ENCODE measurements at regions of chr10 and their contacts with region 1.

Region 1: DNA sequence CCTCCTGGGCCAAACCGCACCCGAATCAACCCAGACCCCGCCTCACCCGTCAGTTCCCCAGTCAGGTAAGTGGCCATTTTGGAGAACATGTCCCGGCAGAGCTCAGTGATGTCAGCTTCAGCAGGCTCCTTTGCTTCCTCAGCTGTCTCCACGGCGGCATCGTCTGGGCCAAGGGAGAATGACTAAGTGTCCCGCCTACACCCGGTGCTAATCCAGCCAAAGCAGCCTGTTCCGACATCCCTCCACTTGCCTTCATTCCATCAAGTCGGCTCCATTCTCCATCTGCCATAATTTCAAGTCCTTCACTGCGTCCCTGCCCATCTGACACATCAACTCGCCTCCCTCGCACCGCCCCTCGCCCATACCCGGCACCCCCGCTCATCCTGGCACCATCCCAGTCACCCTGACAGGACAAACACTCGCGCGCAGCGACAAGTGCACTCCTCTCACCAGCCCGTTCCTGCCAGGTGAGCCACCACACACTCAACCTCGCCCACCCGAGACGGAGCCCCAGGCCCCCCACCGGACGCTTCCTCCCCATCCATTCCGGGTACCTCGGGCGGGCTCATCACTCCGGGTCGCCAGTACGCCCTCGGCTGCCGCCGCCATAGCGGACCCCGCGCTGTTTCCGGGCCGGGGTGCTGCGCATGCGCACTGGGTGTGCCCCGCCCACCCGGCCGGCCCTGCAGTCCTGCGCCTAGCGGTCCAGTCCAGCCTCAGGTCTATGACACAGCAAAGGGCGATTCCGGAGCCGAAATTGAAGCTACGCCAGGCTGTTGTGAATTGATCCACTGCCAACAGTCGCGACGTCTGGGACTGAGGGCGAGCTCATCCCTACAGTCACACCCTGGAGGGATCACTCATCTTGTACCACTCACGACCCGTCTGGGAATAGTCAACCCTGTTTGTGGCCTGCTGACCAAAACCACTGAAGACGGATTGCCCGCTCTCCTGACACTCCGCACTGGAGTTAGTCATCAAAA is at the start of gene BLOC1S2:
- DNase-seq: peak; percentile 80 to 90
- ATAC-seq: peak; percentile 89 to 92
- H3K4me3 ChIP-seq: peak within 1 kb of the TSS; percentile 70 to 95 (median 89)
- H3K27ac ChIP-seq: peak within 1 kb of the TSS; percentile 89 to 98 (median 96)
- H3K4me1 ChIP-seq: peaks cover 26 to 40% of the 10 kb centered on the region in 2 donors
- H3K27me3 ChIP-seq: no peaks in the 10 kb centered on the region
- CTCF ChIP-seq: peak in 2 of 5 experiments; percentile 35 to 36
- POLR2A ChIP-seq: peak; percentile 88 to 89
- total RNA-seq, gene BLOC1S2: 60.4 to 114 (median 75.1) TPM

Region 2: GRCh38 chr10:100185364-100186252 is 100.7 kb before region 1 on chr10 and contains the start of gene ERLIN1:
- in situ Hi-C with region 1: no loop called
- intact Hi-C with region 1: loop called (anchors 1 kb)
- DNase-seq: peak; percentile 85 to 88
- ATAC-seq: peak; percentile 95
- H3K4me3 ChIP-seq: peak within 1 kb of the TSS; percentile 78 to 94 (median 90)
- H3K27ac ChIP-seq: peak within 1 kb of the TSS; percentile 94 to 99 (median 95)
- H3K4me1 ChIP-seq: peaks cover 15 to 35% of the 10 kb centered on the region in 2 donors
- H3K27me3 ChIP-seq: no peaks in the 10 kb centered on the region
- CTCF ChIP-seq: no peak
- POLR2A ChIP-seq: peak; percentile 81 to 83
- total RNA-seq, gene ERLIN1: 5.3 to 8.5 (median 7.3) TPM

Region 3: GRCh38 chr10:100229819-100230422 is 56.4 kb before region 1 on chr10:
- in situ Hi-C with region 1: no loop called
- intact Hi-C with region 1: loop called (anchors 2 kb)
- DNase-seq: no peak
- ATAC-seq: no peak
- H3K4me3 ChIP-seq: peak overlapping the region; percentile 73 to 96 (median 86)
- H3K27ac ChIP-seq: peak overlapping the region; percentile 80 to 87 (median 83)
- H3K4me1 ChIP-seq: peaks cover 14 to 16% of the 10 kb centered on the region in 2 donors
- H3K27me3 ChIP-seq: no peaks in the 10 kb centered on the region
- CTCF ChIP-seq: no peak
- POLR2A ChIP-seq: no peak

Region 4: DNA sequence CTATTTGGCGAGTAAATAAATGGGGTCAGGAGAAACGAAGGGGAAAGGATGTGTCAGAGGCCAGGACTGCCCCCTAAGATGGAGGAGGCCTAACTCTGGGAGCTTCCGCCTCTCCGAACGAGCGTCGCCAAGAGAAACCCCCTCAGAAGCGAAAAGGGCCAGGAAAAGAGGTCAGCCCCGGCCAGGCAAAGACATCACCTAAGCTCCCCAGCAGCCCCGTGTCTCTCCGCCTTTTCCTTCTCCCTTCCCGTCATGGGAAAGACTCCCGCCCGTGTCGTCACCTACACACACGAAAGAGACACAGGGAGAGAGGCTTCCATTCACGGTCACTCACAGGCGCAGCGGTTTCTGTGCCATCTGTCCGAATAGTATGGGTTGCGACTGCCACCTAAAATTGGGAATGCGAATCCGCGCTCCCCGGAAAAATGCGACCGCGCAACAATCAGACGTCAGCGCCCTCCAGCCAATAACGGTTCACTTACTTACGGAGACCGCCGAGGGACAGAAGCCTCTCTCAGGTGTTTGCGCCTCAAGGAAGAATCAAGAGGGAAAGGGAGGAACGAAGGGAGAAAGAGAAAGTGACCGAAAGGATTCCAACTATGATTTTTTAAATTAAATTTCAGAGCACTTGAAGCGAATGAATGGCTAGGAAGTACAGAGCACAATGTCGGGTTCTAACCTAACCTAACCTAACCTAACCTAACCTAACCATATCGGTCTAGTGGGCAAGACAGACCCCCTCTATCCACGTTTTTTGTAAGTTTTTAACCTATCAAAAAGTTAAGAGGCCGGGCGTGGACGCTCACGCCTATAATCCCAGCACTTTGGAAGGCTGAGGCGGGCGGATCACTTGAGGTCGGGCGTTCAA is 18.9 kb before region 1 on chr10 and contains the start of gene CWF19L1:
- in situ Hi-C with region 1: no loop called
- intact Hi-C with region 1: loop called (anchors 1 kb)
- DNase-seq: peak; percentile 78 to 86
- ATAC-seq: peak; percentile 99
- H3K4me3 ChIP-seq: peak within 1 kb of the TSS; percentile 68 to 99 (median 90)
- H3K27ac ChIP-seq: peak within 1 kb of the TSS; percentile 76 to 86 (median 80)
- H3K4me1 ChIP-seq: peaks cover 9 to 20% of the 10 kb centered on the region in 2 donors
- H3K27me3 ChIP-seq: no peaks in the 10 kb centered on the region
- CTCF ChIP-seq: no peak
- POLR2A ChIP-seq: peak; percentile 14 to 25
- total RNA-seq, gene CWF19L1: 11.6 to 13.8 (median 13.0) TPM

Region 5: DNA sequence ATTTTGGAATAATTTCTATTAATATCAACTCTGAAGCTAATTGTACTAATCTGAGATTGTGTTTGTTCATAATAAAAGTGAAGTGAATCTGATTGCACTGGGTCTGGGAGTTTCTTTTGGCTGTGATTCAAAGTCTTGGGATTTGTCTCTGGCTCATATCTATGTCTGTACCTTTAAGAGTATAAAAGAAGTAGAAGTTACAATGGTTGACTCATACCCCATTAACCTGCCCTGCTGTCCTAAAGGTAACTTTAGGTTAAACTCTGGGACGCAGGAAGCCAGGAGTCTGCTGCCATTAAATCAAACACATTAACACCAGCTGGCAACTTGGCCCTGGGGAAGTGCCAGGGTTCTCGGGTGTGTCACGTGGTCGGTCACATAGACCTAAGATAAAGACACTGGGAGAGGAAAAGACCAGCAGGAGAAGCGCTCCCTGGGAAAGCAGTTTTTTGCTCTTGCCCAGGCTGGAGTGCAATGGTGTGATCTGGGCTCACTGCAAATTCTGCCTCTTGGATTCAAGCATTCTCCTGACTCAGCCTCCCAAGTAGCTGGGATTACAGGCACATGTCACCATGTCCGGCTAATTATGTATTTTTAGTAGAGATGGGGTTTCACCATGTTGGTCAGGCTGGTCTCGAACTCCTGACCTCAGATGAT is 78.5 kb after region 1 on chr10:
- in situ Hi-C with region 1: no loop called
- intact Hi-C with region 1: loop called (anchors 2 kb)
- DNase-seq: peak; percentile 86 to 96
- ATAC-seq: peak; percentile 98 to 99
- H3K4me3 ChIP-seq: no peak overlapping the region
- H3K27ac ChIP-seq: peak overlapping the region; percentile 66 to 74 (median 70)
- H3K4me1 ChIP-seq: peaks cover 16 to 17% of the 10 kb centered on the region in 2 donors
- H3K27me3 ChIP-seq: no peaks in the 10 kb centered on the region
- CTCF ChIP-seq: peak in 1 of 5 experiments; percentile 17
- POLR2A ChIP-seq: peak in 1 of 2 donors; percentile 34

Region 6: DNA sequence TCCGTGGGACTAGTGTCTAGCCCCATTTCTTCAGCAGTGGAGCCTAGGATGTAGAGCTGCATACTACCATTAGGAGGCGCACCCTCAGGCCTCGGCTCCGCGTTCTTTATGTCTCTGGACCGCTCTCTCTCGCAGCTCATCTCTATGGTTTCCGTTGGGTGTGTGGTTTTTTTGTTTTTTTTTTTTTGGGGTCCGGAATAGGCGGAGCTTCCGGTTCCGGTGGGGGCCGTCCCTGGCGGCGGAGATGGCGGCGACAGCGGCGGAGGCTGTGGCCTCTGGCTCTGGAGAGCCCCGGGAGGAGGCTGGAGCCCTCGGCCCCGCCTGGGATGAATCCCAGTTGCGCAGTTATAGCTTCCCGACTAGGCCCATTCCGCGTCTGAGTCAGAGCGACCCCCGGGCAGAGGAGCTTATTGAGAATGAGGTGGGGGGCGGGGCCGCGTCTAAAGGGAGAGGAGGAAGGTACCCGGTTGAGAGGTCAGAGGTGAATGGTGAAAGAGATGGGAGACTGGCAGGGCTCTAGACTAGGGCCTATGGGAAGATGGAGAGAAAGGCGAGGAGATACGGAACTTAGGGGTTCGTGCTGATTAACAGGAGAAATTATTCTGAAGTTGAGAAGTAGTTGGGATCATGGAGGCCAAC is 249.5 kb after region 1 on chr10 and contains the start of gene HIF1AN:
- in situ Hi-C with region 1: no loop called
- intact Hi-C with region 1: loop called (anchors 2 kb)
- DNase-seq: peak; percentile 81 to 91
- ATAC-seq: peak; percentile 97 to 98
- H3K4me3 ChIP-seq: peak within 1 kb of the TSS; percentile 71 to 99 (median 88)
- H3K27ac ChIP-seq: peak within 1 kb of the TSS; percentile 76 to 86 (median 82)
- H3K4me1 ChIP-seq: peaks cover 20 to 31% of the 10 kb centered on the region in 2 donors
- H3K27me3 ChIP-seq: no peaks in the 10 kb centered on the region
- CTCF ChIP-seq: peak; percentile 71 to 96 (median 83)
- POLR2A ChIP-seq: peak; percentile 67 to 81
- total RNA-seq, gene HIF1AN: 21.6 to 25.7 (median 24.0) TPM

Measured in gastrocnemius medialis (tissue), 4 donors.